Caco-2 (cell line): ENCODE measurements at regions of chr4 and their contacts with region 1.

Region 1: GRCh38 chr4:12678948-12679616 is 805.1 kb downstream of the RAB28 start:
- DNase-seq: peak in 1 of 2 experiments; percentile 15
- H3K4me3 ChIP-seq: no peak overlapping the region
- H3K4me3 Mint-ChIP-seq: no peak overlapping the region
- H3K27ac Mint-ChIP-seq: no peak overlapping the region
- H3K4me1 ChIP-seq: peaks cover 8% of the 10 kb centered on the region; the same call in 1 of the 2 replicates
- H3K4me1 Mint-ChIP-seq: no peaks in the 10 kb centered on the region
- H3K27me3 ChIP-seq: no peaks in the 10 kb centered on the region
- H3K27me3 Mint-ChIP-seq: no peaks in the 10 kb centered on the region
- CTCF ChIP-seq: peak; percentile 47 to 54

Region 2: DNA sequence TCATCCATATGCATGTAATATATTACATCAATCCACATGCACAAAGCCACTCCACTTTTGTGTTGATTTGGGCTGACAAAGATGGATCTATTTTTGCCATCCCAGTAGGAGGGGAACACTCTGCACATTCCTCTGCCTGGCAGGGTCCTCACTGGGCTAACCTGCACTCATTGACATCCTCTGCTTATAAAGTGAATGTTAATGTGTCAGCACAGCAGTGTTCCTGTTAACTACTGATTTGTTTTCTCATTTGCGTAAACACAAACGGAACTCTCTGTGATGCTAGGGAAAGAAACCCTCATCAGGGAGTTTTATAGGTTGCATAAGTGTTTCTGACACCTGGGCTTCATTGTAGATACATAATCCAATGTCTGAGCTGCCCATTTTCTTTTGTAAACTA is 20.9 kb before region 1 on chr4:
- CTCF ChIA-PET with region 1: no interaction called
- POLR2A ChIA-PET with region 1: no interaction called
- intact Hi-C with region 1: no loop called
- DNase-seq: no peak
- H3K4me3 ChIP-seq: no peak overlapping the region
- H3K4me3 Mint-ChIP-seq: no peak overlapping the region
- H3K27ac Mint-ChIP-seq: no peak overlapping the region
- H3K4me1 ChIP-seq: no peaks in the 10 kb centered on the region
- H3K4me1 Mint-ChIP-seq: no peaks in the 10 kb centered on the region
- H3K27me3 ChIP-seq: no peaks in the 10 kb centered on the region
- H3K27me3 Mint-ChIP-seq: no peaks in the 10 kb centered on the region
- CTCF ChIP-seq: no peak

Region 3: DNA sequence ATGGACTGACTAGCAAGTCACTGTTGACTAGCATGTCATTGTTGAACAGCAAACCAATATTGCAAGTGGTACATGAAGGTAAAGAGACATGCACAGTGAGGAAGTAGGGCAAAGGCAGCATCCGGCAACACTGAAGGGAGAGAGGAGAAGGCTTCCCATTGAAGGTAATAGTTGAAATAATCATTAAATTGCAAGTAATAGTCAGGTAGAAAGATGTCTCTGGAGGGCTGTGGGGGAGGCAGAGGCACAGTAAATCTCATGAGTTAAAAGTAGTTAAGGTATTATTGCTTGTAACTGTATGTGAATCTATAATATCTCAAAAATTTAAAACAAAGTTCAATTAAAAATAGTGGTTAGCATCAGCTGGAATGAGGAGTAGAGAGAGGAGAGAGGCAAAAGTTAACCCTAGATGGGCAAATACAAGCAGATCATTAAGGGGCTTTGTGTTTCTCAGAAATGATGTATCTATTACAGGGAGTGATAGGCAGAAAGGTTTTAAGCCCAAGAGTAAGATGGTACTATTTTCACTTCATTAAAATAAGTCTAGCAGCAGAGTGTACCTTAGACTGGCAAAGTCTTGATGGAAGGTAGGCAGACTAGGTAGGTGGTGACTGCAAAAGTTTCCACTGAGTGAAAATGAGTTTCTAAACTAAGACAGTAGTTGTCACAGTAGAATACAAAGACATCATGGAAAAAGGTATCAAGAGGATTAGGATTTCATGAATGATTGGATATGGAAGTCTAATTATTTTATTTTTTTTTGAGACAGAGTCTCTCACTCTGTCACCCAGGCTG is 28.5 kb after region 1 on chr4:
- CTCF ChIA-PET with region 1: no interaction called
- POLR2A ChIA-PET with region 1: no interaction called
- intact Hi-C with region 1: loop called (anchors 2 kb)
- DNase-seq: no peak
- H3K4me3 ChIP-seq: no peak overlapping the region
- H3K4me3 Mint-ChIP-seq: peak overlapping the region; percentile 56
- H3K27ac Mint-ChIP-seq: peak overlapping the region; percentile 90
- H3K4me1 ChIP-seq: peaks cover 33% of the 10 kb centered on the region
- H3K4me1 Mint-ChIP-seq: peaks cover 22% of the 10 kb centered on the region
- H3K27me3 ChIP-seq: no peaks in the 10 kb centered on the region
- H3K27me3 Mint-ChIP-seq: no peaks in the 10 kb centered on the region
- CTCF ChIP-seq: no peak

Region 4: GRCh38 chr4:12729384-12729783 is 50.3 kb after region 1 on chr4:
- CTCF ChIA-PET with region 1: no interaction called
- POLR2A ChIA-PET with region 1: no interaction called
- intact Hi-C with region 1: loop called (anchors 1 kb)
- DNase-seq: no peak
- H3K4me3 ChIP-seq: no peak overlapping the region
- H3K4me3 Mint-ChIP-seq: no peak overlapping the region
- H3K27ac Mint-ChIP-seq: no peak overlapping the region
- H3K4me1 ChIP-seq: 0 out of 2 replicates have a peak, but pooled peaks cover 2% of the 10 kb centered on the region
- H3K4me1 Mint-ChIP-seq: no peaks in the 10 kb centered on the region
- H3K27me3 ChIP-seq: no peaks in the 10 kb centered on the region
- H3K27me3 Mint-ChIP-seq: peaks cover 16% of the 10 kb centered on the region
- CTCF ChIP-seq: peak in 1 of 2 experiments; percentile 24

Region 5: GRCh38 chr4:12873351-12873750 is 194.3 kb after region 1 on chr4:
- CTCF ChIA-PET with region 1: no interaction called
- POLR2A ChIA-PET with region 1: no interaction called
- intact Hi-C with region 1: no loop called
- DNase-seq: no peak
- H3K4me3 ChIP-seq: no peak overlapping the region
- H3K4me3 Mint-ChIP-seq: no peak overlapping the region
- H3K27ac Mint-ChIP-seq: no peak overlapping the region
- H3K4me1 ChIP-seq: no peaks in the 10 kb centered on the region
- H3K4me1 Mint-ChIP-seq: no peaks in the 10 kb centered on the region
- H3K27me3 ChIP-seq: no peaks in the 10 kb centered on the region
- H3K27me3 Mint-ChIP-seq: no peaks in the 10 kb centered on the region
- CTCF ChIP-seq: no peak